Activated T-helper 1 cell treated with anti-CD3 and anti-CD28 coated beads, Interleukin-12 subunit alpha, Interleukin-12 subunit beta, Interleukin-2, Interleukin-4 antibody, amounts not matched to agents 30 ng/mL and 10 ng/mL and 1 ng/mL, durations not matched to agents 14 hours and 24 hours and 36 hours (primary cell): ENCODE measurements at regions of chr4 and their contacts with region 1.

Region 1: DNA sequence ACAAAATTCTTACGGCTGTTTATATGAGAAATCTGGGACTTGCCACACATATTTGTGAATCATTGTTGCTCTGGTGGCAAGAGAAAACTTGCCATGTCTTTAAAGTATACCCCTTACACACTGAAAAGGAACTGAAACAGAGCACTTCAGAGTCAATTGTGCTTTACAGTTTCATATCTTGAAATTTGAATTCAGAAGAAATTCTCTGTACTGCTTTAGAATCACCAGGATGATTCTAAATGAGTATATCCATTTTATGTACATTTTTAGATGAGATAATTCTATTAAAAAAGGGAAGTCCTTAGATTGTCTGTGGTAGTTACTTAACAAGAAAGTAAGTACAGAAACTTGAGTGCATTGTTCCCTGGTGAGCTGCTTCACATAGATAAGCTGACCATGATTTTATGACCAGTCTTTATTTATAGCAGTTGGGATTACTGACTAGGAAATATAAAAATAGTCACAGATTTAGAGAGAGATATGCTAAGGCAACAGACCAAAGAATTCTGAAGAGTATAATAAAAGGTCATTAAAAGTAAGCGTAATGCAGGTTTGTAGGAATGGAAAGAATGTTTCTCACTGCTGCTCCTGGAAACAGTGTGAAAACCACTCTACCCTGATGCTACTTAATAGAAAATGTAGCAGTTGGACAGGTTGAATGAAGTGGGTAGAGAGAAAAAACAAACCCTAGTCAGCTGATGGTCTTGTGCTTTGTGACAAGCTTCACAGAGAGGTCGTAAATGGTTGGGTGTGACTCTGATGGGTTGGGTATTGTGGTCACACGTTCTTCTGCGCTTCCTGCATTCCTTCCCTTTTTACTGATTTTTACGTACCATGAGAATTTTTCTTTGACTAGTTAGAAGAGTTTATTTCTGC is 41.0 kb downstream of the FNIP2 start:
- DNase-seq: no peak
- H3K4me3 Mint-ChIP-seq: peak overlapping the region; percentile 68
- H3K27ac Mint-ChIP-seq: peak overlapping the region; percentile 83
- H3K4me1 Mint-ChIP-seq: peaks cover 61% of the 10 kb centered on the region
- H3K27me3 Mint-ChIP-seq: peaks cover 2% of the 10 kb centered on the region

Region 2: DNA sequence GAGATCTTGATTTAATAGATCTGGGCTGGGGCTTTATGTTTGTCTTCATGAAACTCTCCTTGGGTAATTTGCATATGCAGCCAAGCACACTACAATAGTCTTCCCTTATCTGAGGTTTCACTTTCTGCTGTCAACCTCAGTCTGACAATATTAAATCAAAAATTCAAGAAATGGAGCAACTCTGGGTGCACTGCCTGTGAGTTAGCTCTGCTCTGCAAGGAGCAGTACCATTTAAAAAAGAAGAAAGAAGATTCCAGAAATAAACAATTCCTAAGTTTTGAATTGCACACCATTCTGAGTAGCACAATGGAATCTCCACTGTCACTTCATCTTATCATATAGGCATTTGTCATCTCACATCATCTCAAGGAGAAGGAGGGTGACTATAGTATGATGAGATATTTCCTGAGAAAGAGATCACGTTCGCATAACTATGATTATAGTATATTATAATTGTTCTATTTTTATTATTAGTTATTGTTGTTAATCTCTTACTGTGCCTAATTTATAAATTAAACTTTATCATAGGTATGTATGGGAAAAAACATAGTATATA is 31.6 kb before region 1 on chr4:
- intact Hi-C with region 1: loop called (anchors 2 kb)
- DNase-seq: no peak
- H3K4me3 Mint-ChIP-seq: no peak overlapping the region
- H3K27ac Mint-ChIP-seq: peak overlapping the region; percentile 79
- H3K4me1 Mint-ChIP-seq: peaks cover 44% of the 10 kb centered on the region
- H3K27me3 Mint-ChIP-seq: no peaks in the 10 kb centered on the region

Region 3: DNA sequence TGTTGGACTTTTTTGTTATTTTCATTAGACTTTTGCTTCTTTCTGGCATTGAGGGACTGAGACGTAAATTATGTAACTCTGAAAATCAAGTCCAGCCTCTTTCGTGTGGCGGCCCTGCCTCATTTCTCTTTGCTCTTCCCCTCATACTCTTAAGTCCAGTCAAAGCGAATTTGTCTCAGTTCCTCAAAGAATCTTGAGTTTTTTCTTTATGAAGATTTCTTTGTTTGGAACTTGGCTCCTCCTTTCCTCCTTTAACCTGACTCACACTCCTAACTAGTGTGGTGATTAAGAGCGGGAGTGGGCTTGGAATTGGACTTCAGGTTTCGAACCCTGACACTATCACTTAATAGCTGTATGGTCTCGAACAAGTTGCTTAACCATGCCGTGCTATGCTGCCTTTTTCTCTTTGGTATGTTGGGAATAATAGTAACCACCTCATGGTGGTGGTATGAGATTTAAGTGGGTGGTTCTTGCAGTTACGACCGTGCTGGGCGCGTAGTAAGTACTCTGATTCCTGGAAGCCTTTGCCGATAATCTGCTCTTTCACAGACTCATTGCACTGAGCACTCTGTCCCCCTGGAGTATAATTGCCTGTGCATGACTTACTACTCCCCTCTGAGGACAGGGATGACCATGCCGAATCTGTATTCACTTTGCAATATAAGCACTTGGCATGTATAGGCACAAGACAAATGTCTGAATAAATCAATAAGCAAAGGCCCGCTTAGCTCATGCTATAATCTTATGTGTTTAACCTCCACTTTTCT is 22.0 kb before region 1 on chr4:
- intact Hi-C with region 1: loop called (anchors 2 kb)
- DNase-seq: no peak
- H3K4me3 Mint-ChIP-seq: no peak overlapping the region
- H3K27ac Mint-ChIP-seq: no peak overlapping the region
- H3K4me1 Mint-ChIP-seq: peaks cover 33% of the 10 kb centered on the region
- H3K27me3 Mint-ChIP-seq: peaks cover 4% of the 10 kb centered on the region

Region 4: DNA sequence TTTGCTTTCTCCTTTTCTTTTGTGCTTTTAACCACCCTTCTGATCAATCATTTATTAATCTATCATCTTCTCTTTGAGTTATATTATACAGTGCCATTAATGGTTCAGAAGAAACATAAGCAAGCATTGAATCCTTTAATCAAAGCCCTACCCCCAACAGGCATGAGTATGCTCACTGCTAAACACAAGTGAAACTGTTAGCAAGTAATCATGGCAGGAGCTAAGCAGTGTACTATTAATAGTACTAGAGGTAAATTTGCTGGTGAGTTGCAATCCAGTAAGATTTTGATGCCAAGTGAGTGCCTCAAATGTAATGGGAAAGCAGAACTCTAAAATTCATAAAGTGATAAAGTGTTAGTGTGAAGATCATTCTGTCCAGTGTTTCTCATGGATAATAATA is 16.2 kb after region 1 on chr4:
- intact Hi-C with region 1: loop called (anchors 2 kb)
- DNase-seq: no peak
- H3K4me3 Mint-ChIP-seq: peak overlapping the region; percentile 69
- H3K27ac Mint-ChIP-seq: peak overlapping the region; percentile 82
- H3K4me1 Mint-ChIP-seq: peaks cover 74% of the 10 kb centered on the region
- H3K27me3 Mint-ChIP-seq: no peaks in the 10 kb centered on the region

Region 5: GRCh38 chr4:159540501-159540900 is 730.7 kb after region 1 on chr4:
- intact Hi-C with region 1: no loop called
- DNase-seq: no peak
- H3K4me3 Mint-ChIP-seq: no peak overlapping the region
- H3K27ac Mint-ChIP-seq: no peak overlapping the region
- H3K4me1 Mint-ChIP-seq: no peaks in the 10 kb centered on the region
- H3K27me3 Mint-ChIP-seq: no peaks in the 10 kb centered on the region